ENCODE measurements at regions of chr6 and their contacts with region 1.

Region 1: DNA sequence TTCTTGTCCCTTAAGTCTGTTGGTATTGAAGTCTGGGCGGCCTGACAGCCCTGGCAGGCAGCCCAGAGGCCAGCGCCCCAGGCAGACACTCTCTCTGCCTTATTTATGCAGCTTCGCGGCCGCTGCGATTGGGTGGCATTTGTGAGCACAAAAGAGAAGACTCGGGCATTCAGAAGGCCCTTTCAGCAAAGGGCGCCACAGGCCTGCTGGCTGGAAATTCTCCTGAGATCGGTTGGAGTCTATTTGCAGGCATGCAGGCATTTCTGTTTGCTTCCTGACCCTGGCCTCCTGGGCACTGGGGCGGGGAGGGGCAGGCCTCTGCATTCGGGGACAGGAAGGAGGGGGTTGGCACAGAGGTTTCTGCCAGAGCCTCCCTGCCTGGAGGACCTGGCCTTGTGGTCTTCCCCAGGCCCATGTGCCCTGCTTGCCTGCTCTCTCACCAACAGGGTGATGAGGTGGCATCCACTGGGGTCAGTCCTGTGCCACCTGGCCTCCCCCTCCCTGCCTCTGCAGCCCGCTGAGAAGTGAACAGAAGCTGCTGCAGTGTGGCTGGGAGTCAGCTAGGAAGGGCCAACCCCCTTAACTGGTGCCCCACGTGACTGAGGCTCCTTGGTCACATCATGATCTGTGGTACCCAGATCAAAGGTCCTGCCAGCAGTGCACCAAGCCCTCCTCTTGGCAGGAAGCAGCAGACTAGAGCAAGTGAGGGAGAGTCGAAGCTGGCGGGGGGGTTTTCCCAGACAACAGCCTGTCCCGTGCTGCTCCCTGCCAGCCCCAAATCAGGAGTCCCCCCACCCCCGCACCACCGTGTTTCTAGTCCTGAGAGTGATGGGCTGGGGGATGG is 16.6 kb upstream of the CCDC167 start:
- DNase-seq: no peak
- ATAC-seq: peak; percentile 86
- H3K4me3 Mint-ChIP-seq: no peak overlapping the region
- H3K27ac Mint-ChIP-seq: peak overlapping the region; percentile 46
- H3K4me1 Mint-ChIP-seq: peaks cover 22% of the 10 kb centered on the region
- H3K27me3 Mint-ChIP-seq: peaks cover 2% of the 10 kb centered on the region
- CTCF ChIP-seq: no peak

Region 2: DNA sequence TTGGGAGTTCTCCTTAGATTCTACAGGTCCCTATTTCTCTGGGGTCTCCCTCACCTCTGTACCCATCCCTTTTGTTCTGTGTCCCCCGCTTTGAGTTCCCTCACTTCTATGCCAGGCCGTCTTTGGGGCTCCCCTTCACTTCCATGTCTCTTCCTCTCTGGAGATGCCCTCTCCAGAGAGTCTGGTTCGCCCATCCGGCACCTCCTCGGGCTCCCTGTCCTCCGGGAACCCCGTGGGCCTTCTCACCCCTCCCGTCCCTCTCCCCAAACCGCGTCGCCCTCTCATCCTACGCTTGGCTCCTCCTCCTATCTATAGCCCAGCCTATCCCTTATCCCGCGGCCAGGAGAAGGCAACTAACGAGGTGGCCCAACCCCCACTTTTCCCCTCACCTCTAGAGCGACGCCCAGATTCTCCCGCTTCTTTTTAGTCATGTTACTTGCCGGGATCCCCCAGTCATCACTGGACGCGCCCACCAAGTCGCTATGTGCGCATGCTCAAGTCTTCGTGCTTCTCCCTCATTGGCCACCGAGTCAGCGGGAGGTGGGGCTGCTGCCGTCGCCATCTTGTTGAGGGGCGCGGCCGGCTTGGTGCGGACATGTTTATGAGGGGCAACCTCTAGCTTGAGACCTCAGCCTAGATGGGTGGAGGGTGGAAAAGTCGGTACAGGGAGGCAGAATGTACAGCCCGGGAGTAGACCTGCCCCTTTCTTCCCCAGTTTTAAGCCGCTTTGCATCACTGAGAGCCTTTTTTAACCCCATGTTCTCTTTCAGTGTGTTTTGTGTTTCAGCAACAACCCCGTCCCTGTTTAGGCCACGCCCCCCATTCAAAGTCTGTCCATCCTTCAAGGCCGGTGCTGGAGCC is 16.6 kb before region 1 on chr6 and contains the start of gene CCDC167:
- CTCF ChIA-PET with region 1: no interaction called
- POLR2A ChIA-PET with region 1: interaction called, 4 read pairs
- intact Hi-C with region 1: loop called (anchors 1 kb)
- DNase-seq: peak; percentile 86
- ATAC-seq: peak; percentile 96
- H3K4me3 Mint-ChIP-seq: peak within 1 kb of the TSS; percentile 96
- H3K27ac Mint-ChIP-seq: peak within 1 kb of the TSS; percentile 82
- H3K4me1 Mint-ChIP-seq: peaks cover 65% of the 10 kb centered on the region
- H3K27me3 Mint-ChIP-seq: no peaks in the 10 kb centered on the region
- CTCF ChIP-seq: no peak
- total RNA-seq, gene CCDC167: 18.4 and 25.9 TPM in 2 replicates

Measured in activated B cell treated with CpG ODN at 0.5 μM for 24 hours (primary cell).